Ascending aorta (tissue), 2 donors: ENCODE measurements at regions of chr2 and their contacts with region 1.

Region 1: GRCh38 chr2:65300761-65301711 is 73.4 kb downstream of the ACTR2 start:
- DNase-seq: peak in 1 of 2 donors; percentile 78
- H3K4me3 ChIP-seq: peak overlapping the region in 1 of 2 donors; percentile 52
- H3K27ac ChIP-seq: peak overlapping the region; percentile 76 to 83
- H3K4me1 ChIP-seq: peaks cover 16 to 27% of the 10 kb centered on the region in 2 donors
- H3K27me3 ChIP-seq: no peaks in the 10 kb centered on the region
- CTCF ChIP-seq: no peak

Region 2: GRCh38 chr2:65227425-65228262 is 73.4 kb before region 1 on chr2 and contains the start of gene ACTR2:
- intact Hi-C with region 1: loop called (anchors 2 kb)
- DNase-seq: peak; percentile 86 to 98
- H3K4me3 ChIP-seq: peak within 1 kb of the TSS; percentile 66 to 100
- H3K27ac ChIP-seq: peak within 1 kb of the TSS; percentile 89 to 100
- H3K4me1 ChIP-seq: peaks cover 3 to 36% of the 10 kb centered on the region in 2 donors
- H3K27me3 ChIP-seq: no peaks in the 10 kb centered on the region
- CTCF ChIP-seq: no peak
- total RNA-seq, gene ACTR2: 78.0 TPM